Mucosa of descending colon (tissue), 3 donors: ENCODE measurements at regions of chr16 and their contacts with region 1.

Region 1: DNA sequence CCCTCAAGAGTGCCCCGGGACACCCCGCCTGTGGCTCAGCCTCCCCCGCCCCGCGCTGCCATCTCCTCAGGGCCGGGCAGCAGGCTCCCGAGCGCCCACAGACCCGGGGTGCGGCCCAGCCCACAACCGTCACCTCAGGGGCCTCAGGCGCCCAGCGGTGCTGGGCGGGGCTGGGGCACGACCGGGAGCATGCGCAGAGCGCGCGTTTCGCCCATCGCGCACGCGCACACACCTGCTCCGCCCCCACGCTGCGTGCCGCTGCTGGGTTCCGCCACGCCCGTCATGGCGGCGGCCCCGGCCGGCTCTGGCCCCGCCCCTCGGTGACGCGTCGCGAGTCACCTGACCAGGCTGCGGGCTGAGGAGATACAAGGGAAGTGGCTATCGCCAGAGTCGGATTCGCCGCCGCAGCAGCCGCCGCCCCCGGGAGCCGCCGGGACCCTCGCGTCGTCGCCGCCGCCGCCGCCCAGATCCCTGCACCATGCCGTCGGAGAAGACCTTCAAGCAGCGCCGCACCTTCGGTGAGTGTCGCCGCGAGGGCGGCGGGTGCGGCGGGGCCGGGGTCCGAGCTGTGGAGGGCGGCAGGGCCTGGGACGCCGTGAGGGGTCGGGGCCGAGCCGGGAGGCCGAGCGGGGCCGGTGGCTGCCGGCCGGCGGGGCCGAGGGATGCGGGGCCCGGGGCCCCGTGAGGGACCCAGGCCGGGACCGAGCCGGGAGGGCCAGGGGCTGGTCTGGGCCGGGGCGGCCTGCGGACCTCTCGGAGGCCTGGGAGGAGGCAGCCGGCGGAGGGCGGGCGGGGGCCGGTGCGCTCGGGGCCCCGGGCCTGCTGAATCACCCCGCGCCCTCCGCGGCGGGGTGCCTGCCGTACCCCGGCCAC is at the start of gene MAP1LC3B:
- DNase-seq: peak; percentile 98 to 100 (median 98)
- ATAC-seq: peak; percentile 84
- H3K4me3 ChIP-seq: peak within 1 kb of the TSS; percentile 83
- H3K4me1 ChIP-seq: peaks cover 40% of the 10 kb centered on the region
- CTCF ChIP-seq: peak; percentile 9
- total RNA-seq, gene MAP1LC3B: 66.5 to 82.9 (median 67.3) TPM

Region 2: DNA sequence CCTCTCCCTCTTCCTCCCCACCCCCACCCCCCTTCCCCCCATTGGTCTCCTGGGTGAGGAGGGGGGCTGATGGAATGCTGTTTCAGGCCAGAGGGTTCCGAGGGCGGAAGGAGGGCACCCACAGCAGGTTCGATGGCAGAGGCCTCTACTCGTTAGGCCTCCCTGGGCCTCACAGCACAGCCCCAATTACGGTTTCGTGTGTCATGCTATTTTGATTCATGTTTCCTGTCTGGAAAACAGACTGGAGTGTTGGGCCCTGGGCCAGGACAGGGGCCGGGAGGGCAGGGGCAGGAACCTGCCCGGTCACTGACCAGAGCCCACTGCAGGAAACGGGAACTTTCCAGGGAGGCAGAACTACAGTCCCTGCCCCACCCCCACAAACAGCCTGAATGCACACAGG is 213.2 kb before region 1 on chr16:
- intact Hi-C with region 1: no loop called
- DNase-seq: peak in 1 of 3 donors; percentile 2
- ATAC-seq: no peak
- H3K4me3 ChIP-seq: no peak overlapping the region
- H3K4me1 ChIP-seq: no peaks in the 10 kb centered on the region
- CTCF ChIP-seq: no peak

Region 3: GRCh38 chr16:87316923-87317749 is 75.0 kb before region 1 on chr16 and contains the start of gene C16orf95:
- intact Hi-C with region 1: loop called in 1 of 2 experiments (anchors 10 kb)
- DNase-seq: peak; percentile 96 to 99 (median 97)
- ATAC-seq: peak; percentile 98
- H3K4me3 ChIP-seq: peak within 1 kb of the TSS; percentile 86
- H3K4me1 ChIP-seq: peaks cover 11% of the 10 kb centered on the region
- CTCF ChIP-seq: peak; percentile 58
- total RNA-seq, gene C16orf95: 2.5 to 4.2 (median 3.0) TPM

Region 4: GRCh38 chr16:87702325-87702811 is 310.2 kb after region 1 on chr16:
- intact Hi-C with region 1: no loop called
- DNase-seq: peak in 2 of 3 donors; percentile 39 to 44
- ATAC-seq: peak; percentile 34
- H3K4me3 ChIP-seq: no peak overlapping the region
- H3K4me1 ChIP-seq: no peaks in the 10 kb centered on the region
- CTCF ChIP-seq: no peak